ENCODE measurements at regions of chr3 and their contacts with region 1.

Region 1: DNA sequence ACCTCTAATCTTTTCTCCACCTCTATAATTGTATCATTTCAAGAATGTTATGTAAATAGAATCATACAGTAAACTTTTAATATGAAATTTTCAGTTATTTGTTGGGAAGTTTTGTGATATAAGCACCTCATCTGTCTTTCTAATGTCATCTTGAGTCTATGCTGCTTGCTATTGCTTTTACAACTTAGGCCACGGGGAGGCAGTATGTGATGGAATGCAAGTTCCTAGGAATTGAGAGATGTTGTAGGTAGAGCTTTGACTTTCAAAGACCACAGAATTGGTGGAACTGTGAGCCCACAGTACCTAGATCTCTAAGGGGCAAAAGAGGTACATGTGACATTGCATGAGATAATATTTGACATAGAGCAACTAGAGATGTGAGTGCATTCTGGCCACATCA is 328.3 kb downstream of the MFSD1 start:
- DNase-seq: no peak
- ATAC-seq: no peak
- H3K4me3 ChIP-seq: no peak overlapping the region
- H3K27ac ChIP-seq: no peak overlapping the region
- H3K4me1 ChIP-seq: peaks cover 0 to 5% (median 0%) of the 10 kb centered on the region in 9 donors
- H3K27me3 ChIP-seq: no peaks in the 10 kb centered on the region
- CTCF ChIP-seq: peak in 5 of 9 donors; percentile 14 to 26 (median 23)

Region 2: DNA sequence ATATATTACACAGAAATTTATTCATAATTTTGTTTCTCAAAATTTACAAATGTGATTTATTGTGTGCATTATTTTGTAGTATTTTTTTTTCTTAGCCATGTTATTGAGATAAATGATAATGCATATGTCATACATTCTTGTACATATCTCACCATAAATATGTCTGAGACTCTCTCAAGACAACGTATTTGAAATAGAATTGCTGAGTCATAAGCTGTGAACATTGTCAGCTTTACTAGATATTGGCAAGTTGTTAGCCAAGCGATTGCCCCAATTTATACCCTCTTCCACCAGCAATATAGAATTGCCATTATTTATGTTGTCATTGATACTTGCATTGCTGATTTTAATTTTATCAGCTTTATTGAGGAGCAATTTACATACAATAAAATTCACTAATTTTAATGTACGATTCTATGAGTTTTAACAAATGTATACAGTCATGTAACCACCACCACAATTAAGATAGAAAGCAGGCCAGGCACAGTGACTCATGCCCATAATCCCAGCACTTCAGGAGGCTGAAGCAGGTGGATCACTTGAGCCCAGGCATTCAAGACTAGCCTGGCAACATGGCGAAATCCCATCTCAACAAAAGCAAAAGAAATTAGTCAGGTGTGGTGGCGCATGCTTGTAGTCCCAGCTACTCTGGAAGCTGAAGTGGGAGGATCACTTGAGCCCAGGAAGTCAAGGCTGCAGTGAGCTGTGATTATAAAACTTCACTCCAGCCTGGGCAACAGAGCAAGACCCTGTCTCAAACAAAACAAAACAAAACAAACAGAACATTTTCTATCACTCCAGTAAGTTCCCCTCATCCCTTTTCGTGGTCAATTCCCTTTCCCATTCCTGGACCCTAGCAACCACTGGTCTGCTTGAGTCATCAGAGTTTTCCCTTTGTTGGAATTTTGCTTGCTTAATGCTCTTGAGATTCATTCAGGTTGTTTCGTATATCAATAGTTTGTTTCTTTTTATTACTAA is 44.9 kb after region 1 on chr3:
- intact Hi-C with region 1: no loop called
- DNase-seq: no peak
- ATAC-seq: no peak
- H3K4me3 ChIP-seq: no peak overlapping the region
- H3K27ac ChIP-seq: no peak overlapping the region
- H3K4me1 ChIP-seq: peaks cover 0 to 12% (median 0%) of the 10 kb centered on the region in 9 donors
- H3K27me3 ChIP-seq: no peaks in the 10 kb centered on the region
- CTCF ChIP-seq: no peak

Region 3: GRCh38 chr3:159245871-159246270 is 115.8 kb after region 1 on chr3:
- intact Hi-C with region 1: loop called in 1 of 10 experiments (anchors 2 kb)
- DNase-seq: no peak
- ATAC-seq: no peak
- H3K4me3 ChIP-seq: no peak overlapping the region
- H3K27ac ChIP-seq: no peak overlapping the region
- H3K4me1 ChIP-seq: no peaks in the 10 kb centered on the region
- H3K27me3 ChIP-seq: no peaks in the 10 kb centered on the region
- CTCF ChIP-seq: no peak

Region 4: DNA sequence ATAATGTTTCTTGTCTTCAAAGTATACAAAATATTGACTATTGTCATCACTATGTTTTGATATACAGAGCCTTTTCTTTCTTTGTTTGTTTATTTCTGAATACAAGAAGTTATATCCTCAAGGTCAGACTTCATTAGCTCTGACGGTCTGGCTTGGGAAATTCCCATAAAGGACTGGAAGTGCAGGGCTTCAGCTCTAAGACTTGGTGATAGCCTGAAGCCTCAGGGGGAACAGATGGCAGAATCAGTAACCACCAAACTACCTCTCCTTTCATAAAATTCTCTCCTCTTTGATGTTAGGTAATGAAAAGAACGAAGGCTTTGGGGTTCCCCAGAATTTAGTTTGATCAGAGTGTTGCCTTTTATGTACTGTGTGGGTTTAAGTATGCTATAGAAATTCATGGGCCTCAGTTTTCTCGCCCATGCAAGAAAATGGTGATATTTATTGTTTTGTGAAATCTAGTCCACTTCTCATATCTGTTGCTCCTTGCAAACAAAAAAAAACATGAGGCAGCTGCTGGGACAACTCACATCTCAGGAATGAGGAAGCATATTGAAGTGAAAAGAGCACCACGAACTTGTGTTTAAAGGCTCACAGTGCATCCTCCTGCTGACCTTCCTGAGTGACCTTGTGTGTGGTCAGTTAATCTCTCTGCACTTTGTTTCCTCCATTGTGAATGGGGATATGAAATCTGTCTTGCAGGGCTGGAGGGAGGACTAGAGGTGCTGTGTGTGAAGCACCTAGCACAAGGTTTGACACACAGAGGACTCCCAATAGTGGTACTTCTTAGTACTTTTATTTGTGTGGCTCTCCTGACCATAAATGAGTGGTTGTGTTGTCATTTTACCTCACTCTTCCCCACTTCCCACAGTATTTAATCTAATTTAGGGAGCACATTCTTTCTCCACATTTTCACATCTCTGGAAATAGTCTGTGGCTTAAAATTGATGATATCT is 288.7 kb after region 1 on chr3:
- intact Hi-C with region 1: no loop called
- DNase-seq: no peak
- ATAC-seq: no peak
- H3K4me3 ChIP-seq: no peak overlapping the region
- H3K27ac ChIP-seq: no peak overlapping the region
- H3K4me1 ChIP-seq: no peaks in the 10 kb centered on the region
- H3K27me3 ChIP-seq: no peaks in the 10 kb centered on the region
- CTCF ChIP-seq: no peak